Mucosa of descending colon (tissue), 3 donors: ENCODE measurements at regions of chrX and their contacts with region 1.

Region 1: GRCh38 chrX:50827991-50828390 is 14.0 kb upstream of the SHROOM4 start:
- DNase-seq: no peak
- ATAC-seq: peak; percentile 60
- H3K4me3 ChIP-seq: no peak overlapping the region
- H3K4me1 ChIP-seq: no peaks in the 10 kb centered on the region
- CTCF ChIP-seq: no peak

Region 2: GRCh38 chrX:50779694-50780093 is 48.3 kb before region 1 on chrX:
- intact Hi-C with region 1: loop called in 1 of 2 experiments (anchors 5 kb)
- DNase-seq: no peak
- ATAC-seq: no peak
- H3K4me3 ChIP-seq: no peak overlapping the region
- H3K4me1 ChIP-seq: no peaks in the 10 kb centered on the region
- CTCF ChIP-seq: no peak

Region 3: DNA sequence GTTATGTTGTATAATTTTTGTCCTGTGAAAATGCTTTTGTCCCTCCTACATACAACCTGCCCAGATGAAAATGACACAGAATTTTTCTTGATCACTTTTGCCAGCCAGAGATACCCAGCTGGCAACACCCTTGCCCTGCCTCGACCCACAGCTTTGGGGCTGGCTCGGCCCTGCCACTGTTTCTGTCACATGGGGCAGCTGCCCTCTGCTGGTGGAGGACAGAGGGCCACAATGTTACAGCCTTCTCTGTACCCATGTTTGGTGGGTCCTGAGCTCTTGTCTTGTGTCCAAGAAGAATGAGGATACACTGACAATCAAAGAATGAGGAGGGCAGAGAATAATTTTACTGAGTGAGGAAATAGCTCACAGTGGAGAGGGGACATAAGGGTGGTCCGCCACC is 113.6 kb after region 1 on chrX:
- intact Hi-C with region 1: no loop called
- DNase-seq: peak in 2 of 3 donors; percentile 22 to 28
- ATAC-seq: no peak
- H3K4me3 ChIP-seq: no peak overlapping the region
- H3K4me1 ChIP-seq: no peaks in the 10 kb centered on the region
- CTCF ChIP-seq: no peak

Region 4: GRCh38 chrX:51024077-51024696 is 196.2 kb after region 1 on chrX:
- intact Hi-C with region 1: no loop called
- DNase-seq: no peak
- ATAC-seq: no peak
- H3K4me3 ChIP-seq: no peak overlapping the region
- H3K4me1 ChIP-seq: no peaks in the 10 kb centered on the region
- CTCF ChIP-seq: no peak